HepG2 (cell line): ENCODE measurements at regions of chr12 and their contacts with region 1.

Region 1: DNA sequence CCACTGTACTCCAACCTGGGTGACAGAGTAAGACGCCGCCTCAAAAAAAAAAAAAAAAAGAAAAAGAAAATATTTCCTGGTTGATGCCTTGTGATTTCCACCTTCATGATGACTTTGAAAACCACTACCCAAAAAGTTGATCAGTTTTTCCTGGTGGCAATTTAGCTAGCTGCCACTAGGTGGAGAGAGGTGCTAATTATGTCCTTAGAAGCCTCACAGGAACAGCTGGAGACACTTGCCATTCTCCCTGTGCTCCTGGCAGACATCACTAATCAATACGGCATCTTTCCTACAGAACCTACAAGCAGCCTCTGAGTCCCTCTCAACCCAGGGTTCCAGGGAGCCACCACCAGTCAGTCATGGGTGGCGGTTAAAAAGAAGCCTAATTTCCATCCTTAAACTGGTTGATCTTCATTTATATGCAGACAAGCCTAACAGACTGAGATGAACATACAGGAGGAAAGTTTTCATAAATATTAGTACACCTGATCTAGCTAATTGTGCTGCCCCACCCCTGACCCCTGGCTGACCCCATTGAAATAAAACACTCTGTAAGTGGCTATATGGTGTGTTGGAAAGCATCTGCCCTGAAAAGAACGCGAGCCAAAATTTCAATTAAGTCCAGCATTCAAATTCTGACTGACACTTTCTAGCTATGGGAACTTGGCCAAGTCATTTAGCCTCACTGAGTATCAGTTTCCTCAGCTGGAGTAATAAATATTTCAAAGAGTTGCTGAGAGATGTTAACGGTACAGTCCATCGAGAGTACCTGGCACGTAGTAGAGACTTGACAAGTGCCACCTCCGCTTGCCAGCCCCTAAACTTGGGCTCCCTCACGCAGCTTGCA is 6.2 kb upstream of the OAS1 start:
- DNase-seq: peak; percentile 46
- ATAC-seq: peak; percentile 58
- H3K4me3 ChIP-seq: no peak overlapping the region
- H3K27ac ChIP-seq: no peak overlapping the region
- H3K4me1 ChIP-seq: 0 out of 2 replicates have a peak, but pooled peaks cover under 1% of the 10 kb centered on the region
- H3K27me3 ChIP-seq: peaks cover 3 to 24% of the 10 kb centered on the region in 2 experiments; a peak in 4 of 5 replicates
- CTCF ChIP-seq: peak; percentile 74
- EP300 ChIP-seq: no peak
- POLR2A ChIP-seq: no peak
- RAD21 ChIP-seq: peak; percentile 40

Region 2: GRCh38 chr12:112862636-112863290 is 37.8 kb before region 1 on chr12:
- CTCF ChIA-PET with region 1: no interaction called
- POLR2A ChIA-PET with region 1: no interaction called
- in situ Hi-C with region 1: no loop called
- intact Hi-C with region 1: no loop called
- DNase-seq: no peak
- ATAC-seq: no peak
- H3K4me3 ChIP-seq: no peak overlapping the region
- H3K27ac ChIP-seq: no peak overlapping the region
- H3K4me1 ChIP-seq: no peaks in the 10 kb centered on the region
- H3K27me3 ChIP-seq: peaks cover 2 to 18% of the 10 kb centered on the region in 2 experiments; a peak in 3 of 5 replicates
- CTCF ChIP-seq: no peak
- EP300 ChIP-seq: no peak
- POLR2A ChIP-seq: no peak
- RAD21 ChIP-seq: no peak

Region 3: DNA sequence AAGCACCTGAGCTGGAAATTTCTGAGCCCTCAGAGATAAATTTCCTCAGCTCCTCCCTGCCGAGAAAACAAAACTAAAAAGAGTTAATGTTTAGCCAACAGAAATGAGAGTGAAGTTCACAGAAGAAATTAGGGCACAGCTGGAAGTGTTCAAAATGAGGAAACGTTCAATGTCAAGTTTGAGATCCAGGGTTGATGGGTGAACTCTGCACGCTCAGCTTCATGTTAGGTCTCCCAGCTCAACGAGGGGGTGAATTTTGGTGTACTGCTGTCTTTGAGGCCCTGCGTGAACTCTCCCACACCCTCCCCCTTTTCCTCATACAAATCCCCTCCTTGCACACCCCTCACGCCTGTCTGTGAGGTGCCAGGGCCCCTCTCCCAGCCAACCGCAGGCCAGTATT is 24.5 kb after region 1 on chr12:
- CTCF ChIA-PET with region 1: no interaction called
- POLR2A ChIA-PET with region 1: interaction called, 11 read pairs
- in situ Hi-C with region 1: no loop called
- intact Hi-C with region 1: no loop called
- DNase-seq: peak; percentile 56
- ATAC-seq: peak; percentile 78
- H3K4me3 ChIP-seq: peak overlapping the region in 2 of 3 experiments; percentile 9 to 50; a peak in 3 of 6 replicates
- H3K27ac ChIP-seq: no peak overlapping the region
- H3K4me1 ChIP-seq: peaks cover 38% of the 10 kb centered on the region
- H3K27me3 ChIP-seq: no peaks in the 10 kb centered on the region
- CTCF ChIP-seq: no peak
- EP300 ChIP-seq: peak in 1 of 2 experiments; percentile 22; a peak in 1 of 4 replicates
- POLR2A ChIP-seq: no peak
- RAD21 ChIP-seq: no peak

Region 4: DNA sequence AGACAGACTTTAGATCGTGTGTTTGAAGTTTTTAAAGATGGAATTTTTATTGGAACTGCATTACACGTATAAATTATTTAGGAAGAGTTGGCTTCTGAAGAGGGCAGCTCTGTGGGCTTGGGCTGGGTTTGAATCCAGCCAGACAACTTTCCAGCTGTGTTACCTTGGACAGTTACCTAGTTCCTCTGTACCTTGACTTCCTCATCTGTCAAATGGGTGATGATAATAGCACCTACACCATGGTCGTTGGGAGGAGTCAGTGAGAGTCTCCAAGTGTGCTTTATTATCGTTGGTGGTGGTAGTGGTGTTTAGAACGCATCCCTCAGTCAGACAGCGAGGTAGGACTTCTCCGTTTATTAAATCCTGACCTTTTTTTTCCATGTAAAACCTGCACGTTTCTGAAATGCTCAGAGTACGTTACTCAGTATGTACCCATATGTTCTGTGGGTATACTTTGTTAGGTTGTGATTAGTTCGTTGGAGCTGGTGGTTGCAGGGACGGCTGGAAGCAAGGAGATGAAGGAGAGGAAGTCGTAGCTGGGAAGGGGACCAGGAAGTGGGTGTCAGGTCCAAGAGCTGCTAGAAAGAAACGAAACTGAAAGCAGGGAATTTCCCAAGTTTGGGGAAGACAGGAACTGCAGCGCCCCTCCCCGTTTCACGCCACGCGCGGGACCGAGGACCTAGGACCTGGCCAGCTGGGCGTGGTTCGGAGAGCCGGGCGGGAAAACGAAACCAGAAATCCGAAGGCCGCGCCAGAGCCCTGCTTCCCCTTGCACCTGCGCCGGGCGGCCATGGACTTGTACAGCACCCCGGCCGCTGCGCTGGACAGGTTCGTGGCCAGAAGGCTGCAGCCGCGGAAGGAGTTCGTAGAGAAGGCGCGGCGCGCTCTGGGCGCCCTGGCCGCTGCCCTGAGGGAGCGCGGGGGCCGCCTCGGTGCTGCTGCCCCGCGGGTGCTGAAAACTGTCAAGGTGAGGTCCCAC is 37.5 kb after region 1 on chr12 and contains the start of gene OAS3:
- CTCF ChIA-PET with region 1: no interaction called
- POLR2A ChIA-PET with region 1: no interaction called
- in situ Hi-C with region 1: no loop called
- intact Hi-C with region 1: loop called (anchors 2 kb)
- DNase-seq: peak; percentile 77
- ATAC-seq: peak; percentile 90
- H3K4me3 ChIP-seq: peak within 1 kb of the TSS; percentile 76 to 86 (median 81)
- H3K27ac ChIP-seq: peak within 1 kb of the TSS; percentile 49
- H3K4me1 ChIP-seq: peaks cover 28% of the 10 kb centered on the region
- H3K27me3 ChIP-seq: no peaks in the 10 kb centered on the region; a peak in 1 of 5 replicates
- CTCF ChIP-seq: peak; percentile 52
- EP300 ChIP-seq: no peak
- POLR2A ChIP-seq: peak in 1 of 2 experiments; percentile 54
- RAD21 ChIP-seq: peak; percentile 11; the same call in 1 of the 2 replicates
- total RNA-seq, gene OAS3: 10.5 and 16.7 TPM in 2 replicates

Region 5: GRCh38 chr12:112978163-112979040 is 77.9 kb after region 1 on chr12 and contains the start of gene OAS2:
- CTCF ChIA-PET with region 1: no interaction called
- POLR2A ChIA-PET with region 1: no interaction called
- in situ Hi-C with region 1: no loop called
- intact Hi-C with region 1: loop called (anchors 5 kb)
- DNase-seq: peak; percentile 12
- ATAC-seq: peak; percentile 84
- H3K4me3 ChIP-seq: peak within 1 kb of the TSS; percentile 7 to 70 (median 61); a peak in 5 of 6 replicates
- H3K27ac ChIP-seq: no peak within 1 kb of the TSS
- H3K4me1 ChIP-seq: peaks cover 16% of the 10 kb centered on the region
- H3K27me3 ChIP-seq: peaks cover 0 to 2% of the 10 kb centered on the region in 2 experiments; a peak in 1 of 5 replicates
- CTCF ChIP-seq: no peak
- EP300 ChIP-seq: no peak
- POLR2A ChIP-seq: no peak
- RAD21 ChIP-seq: no peak
- total RNA-seq, gene OAS2: 0.24 and 0.44 TPM in 2 replicates

Region 6: DNA sequence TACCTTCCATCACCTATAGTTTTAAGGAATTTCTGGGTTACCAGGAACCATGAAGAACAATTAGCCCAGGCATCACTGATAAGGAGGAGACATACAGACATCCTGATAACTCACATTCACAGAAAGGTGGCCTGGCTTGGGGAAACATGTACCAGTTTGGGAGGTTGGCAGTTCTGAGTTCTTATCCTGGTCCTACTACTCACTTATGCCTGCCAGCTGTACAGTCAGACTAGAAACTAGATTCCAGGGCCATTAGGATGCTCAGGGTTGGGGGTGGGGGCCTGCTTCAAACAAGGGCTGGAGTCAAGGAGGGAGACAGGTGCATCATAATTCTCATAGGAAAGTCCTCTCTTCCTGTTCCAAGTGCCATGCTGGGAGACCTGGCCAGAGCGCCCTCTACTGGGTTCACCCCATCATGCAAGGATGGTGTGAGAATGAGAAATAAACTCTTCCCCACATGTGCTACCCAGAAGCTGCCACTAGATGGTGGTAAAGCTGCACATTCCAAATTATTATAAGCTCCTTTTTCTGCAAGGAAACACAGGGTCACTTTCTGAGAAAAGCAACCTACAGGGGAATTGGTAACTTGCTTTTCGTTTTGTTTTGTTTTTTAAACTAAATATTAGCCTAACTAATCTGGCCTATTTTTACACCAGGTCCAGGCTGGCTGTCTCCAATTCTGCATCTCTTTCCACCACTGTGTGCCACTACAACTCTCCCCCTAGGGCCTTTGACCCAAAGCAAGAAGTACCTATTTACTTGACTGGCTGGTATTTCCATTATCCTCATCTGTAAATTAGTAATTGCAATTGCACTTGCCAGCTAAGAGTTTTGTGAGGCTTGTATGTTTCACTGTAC is 92.2 kb after region 1 on chr12:
- CTCF ChIA-PET with region 1: interaction called, 5 read pairs
- POLR2A ChIA-PET with region 1: no interaction called
- in situ Hi-C with region 1: no loop called
- intact Hi-C with region 1: loop called (anchors 2 kb)
- DNase-seq: peak; percentile 63
- ATAC-seq: peak; percentile 71
- H3K4me3 ChIP-seq: no peak overlapping the region
- H3K27ac ChIP-seq: no peak overlapping the region
- H3K4me1 ChIP-seq: no peaks in the 10 kb centered on the region
- H3K27me3 ChIP-seq: 0 out of 5 replicates have a peak, but pooled peaks cover 0 to 3% of the 10 kb centered on the region in 2 experiments
- CTCF ChIP-seq: peak; percentile 85
- EP300 ChIP-seq: no peak
- POLR2A ChIP-seq: no peak
- RAD21 ChIP-seq: peak; percentile 72

Region 7: GRCh38 chr12:113030875-113031525 is 130.5 kb after region 1 on chr12:
- CTCF ChIA-PET with region 1: interaction called, 7 read pairs
- POLR2A ChIA-PET with region 1: no interaction called
- in situ Hi-C with region 1: no loop called
- intact Hi-C with region 1: loop called (anchors 1 kb)
- DNase-seq: peak; percentile 45
- ATAC-seq: peak; percentile 79
- H3K4me3 ChIP-seq: no peak overlapping the region
- H3K27ac ChIP-seq: no peak overlapping the region
- H3K4me1 ChIP-seq: no peaks in the 10 kb centered on the region
- H3K27me3 ChIP-seq: 0 out of 5 replicates have a peak, but pooled peaks cover 0 to 3% of the 10 kb centered on the region in 2 experiments
- CTCF ChIP-seq: peak; percentile 69
- EP300 ChIP-seq: no peak
- POLR2A ChIP-seq: no peak
- RAD21 ChIP-seq: no peak